PC-3 (cell line): ENCODE measurements at regions of chr11 and their contacts with region 1.

Region 1: DNA sequence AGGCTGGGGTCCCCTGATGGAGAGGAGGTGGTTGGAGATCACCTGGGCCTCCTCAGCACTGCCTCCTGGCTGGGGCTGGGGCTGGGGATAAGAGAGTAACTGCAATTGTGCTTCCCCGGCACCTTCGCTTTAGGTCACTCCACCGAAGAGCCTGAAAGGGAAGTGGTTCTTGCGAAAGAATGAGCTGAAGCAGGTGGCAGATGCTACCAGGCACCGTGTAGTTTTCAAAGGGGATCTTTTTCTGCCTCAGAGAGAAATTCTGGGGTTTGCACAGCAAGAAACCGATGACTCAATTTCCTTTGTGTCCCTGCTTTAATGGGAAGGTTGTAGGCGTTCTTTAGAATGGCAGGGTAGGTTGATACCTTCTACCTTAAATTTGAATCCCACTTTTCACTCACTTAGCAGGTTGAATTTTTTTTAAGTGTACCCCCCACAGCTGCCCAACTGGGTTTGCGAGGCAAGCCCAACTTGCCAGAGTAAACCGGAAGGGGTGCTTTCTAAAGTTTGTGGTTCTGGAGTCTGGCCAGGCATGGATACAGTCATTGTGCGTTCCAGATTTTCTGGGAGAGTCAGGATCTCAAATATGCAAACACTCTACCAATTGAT is 5.3 kb downstream of the CD44 start:
- DNase-seq: peak; percentile 83
- ATAC-seq: no peak; the same call in 1 of the 2 replicates
- H3K4me3 ChIP-seq: peak overlapping the region; percentile 99
- H3K27ac ChIP-seq: peak overlapping the region; percentile 82
- H3K4me1 ChIP-seq: peaks cover 57% of the 10 kb centered on the region
- H3K27me3 ChIP-seq: no peaks in the 10 kb centered on the region
- CTCF ChIP-seq: no peak

Region 2: GRCh38 chr11:34997952-34998528 is 146.2 kb before region 1 on chr11:
- CTCF ChIA-PET with region 1: no interaction called
- POLR2A ChIA-PET with region 1: no interaction called
- intact Hi-C with region 1: loop called (anchors 5 kb)
- DNase-seq: peak; percentile 71
- ATAC-seq: peak; percentile 74
- H3K4me3 ChIP-seq: peak overlapping the region; percentile 5; the same call in 1 of the 2 replicates
- H3K27ac ChIP-seq: peak overlapping the region; percentile 79
- H3K4me1 ChIP-seq: peaks cover 20% of the 10 kb centered on the region
- H3K27me3 ChIP-seq: no peaks in the 10 kb centered on the region
- CTCF ChIP-seq: peak; percentile 85

Region 3: GRCh38 chr11:35061611-35062437 is 82.4 kb before region 1 on chr11:
- CTCF ChIA-PET with region 1: no interaction called
- POLR2A ChIA-PET with region 1: interaction called, 3 read pairs
- intact Hi-C with region 1: loop called (anchors 1 kb)
- DNase-seq: peak; percentile 55
- ATAC-seq: peak; percentile 90
- H3K4me3 ChIP-seq: no peak overlapping the region
- H3K27ac ChIP-seq: peak overlapping the region; percentile 74
- H3K4me1 ChIP-seq: peaks cover 14% of the 10 kb centered on the region
- H3K27me3 ChIP-seq: no peaks in the 10 kb centered on the region
- CTCF ChIP-seq: no peak

Region 4: GRCh38 chr11:35165423-35166368 is 21.5 kb after region 1 on chr11:
- CTCF ChIA-PET with region 1: interaction called, 3 read pairs
- POLR2A ChIA-PET with region 1: interaction called, 3 read pairs
- intact Hi-C with region 1: loop called (anchors 1 kb)
- DNase-seq: peak; percentile 71
- ATAC-seq: peak; percentile 29
- H3K4me3 ChIP-seq: peak overlapping the region; percentile 42
- H3K27ac ChIP-seq: peak overlapping the region; percentile 97
- H3K4me1 ChIP-seq: peaks cover 64% of the 10 kb centered on the region
- H3K27me3 ChIP-seq: no peaks in the 10 kb centered on the region
- CTCF ChIP-seq: no peak